ENCODE measurements at regions of chr20 and their contacts with region 1.

Region 1: GRCh38 chr20:38446441-38447209 is 11.5 kb upstream of the SNHG17 start:
- DNase-seq: peak; percentile 92
- CTCF ChIP-seq: peak; percentile 96

Region 2: GRCh38 chr20:38098952-38099351 is 347.7 kb before region 1 on chr20:
- CTCF ChIA-PET with region 1: no interaction called
- POLR2A ChIA-PET with region 1: no interaction called
- DNase-seq: no peak
- CTCF ChIP-seq: no peak

Region 3: GRCh38 chr20:38337561-38338140 is 109.0 kb before region 1 on chr20:
- CTCF ChIA-PET with region 1: no interaction called
- POLR2A ChIA-PET with region 1: no interaction called
- DNase-seq: no peak
- CTCF ChIP-seq: no peak

Region 4: DNA sequence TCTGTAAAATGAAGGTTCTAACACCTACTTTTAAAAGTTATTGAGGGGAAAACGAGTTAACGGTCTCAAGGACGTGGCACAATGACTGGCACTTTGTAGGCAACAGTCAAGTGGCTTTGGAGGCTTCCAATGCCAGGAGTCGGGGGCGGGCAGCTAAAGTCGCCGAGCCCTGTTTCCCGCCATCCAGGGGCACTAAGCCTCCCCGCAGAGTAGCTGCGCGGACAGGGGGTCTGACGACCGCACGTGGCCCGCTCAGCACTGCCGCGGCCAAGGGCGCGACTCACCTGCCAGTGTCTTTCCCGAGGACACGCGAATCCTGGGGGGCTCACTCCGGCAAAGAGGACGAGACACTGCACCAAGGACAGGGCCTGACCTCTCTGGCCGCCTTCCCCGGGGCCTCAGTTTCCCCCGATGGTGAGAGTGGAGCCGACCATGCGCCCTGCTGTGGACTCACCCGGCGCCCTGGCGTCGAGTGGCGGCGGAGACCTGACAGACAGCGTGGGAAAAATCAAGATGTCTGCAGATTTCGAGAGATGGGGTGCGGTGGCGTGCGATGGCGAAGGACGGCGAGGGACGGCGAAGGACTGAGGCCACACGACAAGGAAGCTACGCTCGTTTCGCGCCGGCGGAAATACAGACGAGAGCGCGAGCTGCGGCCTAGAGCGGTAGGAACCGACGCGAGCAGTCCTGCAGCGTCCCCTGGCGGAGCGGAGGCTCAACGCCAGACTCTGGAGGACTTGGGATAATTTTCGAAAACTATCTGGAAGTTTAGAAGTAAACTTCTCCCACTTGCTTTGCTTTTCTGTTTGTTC is 11.7 kb before region 1 on chr20 and contains the start of gene SNHG17:
- CTCF ChIA-PET with region 1: interaction called, 192 read pairs
- POLR2A ChIA-PET with region 1: interaction called, 44 read pairs
- DNase-seq: peak; percentile 92
- CTCF ChIP-seq: peak; percentile 99

Measured in GM10248 (cell line).